Activated T-helper 2 cell treated with anti-CD3 and anti-CD28 coated beads, Interferon-gamma antibody, Interleukin-2, Interleukin-4, amounts not matched to agents 10 μg/mL and 5 μg/mL and 100 μg/mL, durations not matched to agents 14 hours and 24 hours and 36 hours (primary cell): ENCODE measurements at regions of chr12 and their contacts with region 1.

Region 1: GRCh38 chr12:47216150-47216677 is 136.5 kb upstream of the AMIGO2 start:
- DNase-seq: peak; percentile 72
- H3K4me3 Mint-ChIP-seq: peak overlapping the region; percentile 97
- H3K27ac Mint-ChIP-seq: peak overlapping the region; percentile 96
- H3K4me1 Mint-ChIP-seq: peaks cover 52% of the 10 kb centered on the region
- H3K27me3 Mint-ChIP-seq: no peaks in the 10 kb centered on the region

Region 2: GRCh38 chr12:46268590-46269558 is 947.3 kb before region 1 on chr12 and contains the start of gene SLC38A1:
- intact Hi-C with region 1: loop called (anchors 10 kb)
- DNase-seq: peak; percentile 86
- H3K4me3 Mint-ChIP-seq: no peak within 1 kb of the TSS
- H3K27ac Mint-ChIP-seq: no peak within 1 kb of the TSS
- H3K4me1 Mint-ChIP-seq: peaks cover 26% of the 10 kb centered on the region
- H3K27me3 Mint-ChIP-seq: no peaks in the 10 kb centered on the region
- total RNA-seq, gene SLC38A1: 152 and 154 TPM in 2 replicates

Region 3: DNA sequence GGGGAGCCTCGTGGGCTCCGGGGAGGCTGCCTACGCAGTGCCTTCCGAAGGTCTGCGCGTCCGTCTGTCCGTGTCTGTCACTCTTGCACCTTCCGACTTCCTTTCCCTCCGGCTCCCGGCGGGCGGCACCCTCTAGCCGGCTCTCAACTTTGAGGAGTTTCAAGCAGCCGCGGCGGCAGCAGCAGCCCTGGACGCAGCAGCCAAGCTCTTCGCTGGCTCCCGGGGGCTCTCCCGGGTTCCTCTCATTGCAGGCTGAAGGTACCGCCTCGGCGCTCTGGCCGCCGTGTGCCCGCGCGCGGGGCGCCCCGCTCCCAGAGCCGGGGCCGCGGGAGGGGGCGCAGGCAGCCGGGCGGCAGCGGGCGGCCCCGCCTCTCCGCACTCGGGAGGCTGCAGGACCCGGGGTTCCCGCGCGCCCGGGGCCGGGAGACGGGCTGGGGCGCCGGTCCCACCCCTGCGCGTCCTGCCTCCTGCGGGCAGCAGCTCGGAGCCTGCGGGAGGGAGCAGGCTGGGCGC is 136.7 kb before region 1 on chr12 and contains the starts of genes AMIGO2 and PCED1B:
- intact Hi-C with region 1: loop called (anchors 1 kb)
- DNase-seq: peak; percentile 57
- H3K4me3 Mint-ChIP-seq: peak within 1 kb of the TSS; percentile 97
- H3K27ac Mint-ChIP-seq: peak within 1 kb of the TSS; percentile 95
- H3K4me1 Mint-ChIP-seq: peaks cover 63% of the 10 kb centered on the region
- H3K27me3 Mint-ChIP-seq: no peaks in the 10 kb centered on the region
- total RNA-seq, gene AMIGO2: 10.7 and 11.1 TPM in 2 replicates
- total RNA-seq, gene PCED1B: 49.9 and 50.4 TPM in 2 replicates

Region 4: GRCh38 chr12:47133981-47134380 is 82.2 kb before region 1 on chr12:
- intact Hi-C with region 1: no loop called
- DNase-seq: no peak
- H3K4me3 Mint-ChIP-seq: no peak overlapping the region
- H3K27ac Mint-ChIP-seq: no peak overlapping the region
- H3K4me1 Mint-ChIP-seq: peaks cover 2% of the 10 kb centered on the region
- H3K27me3 Mint-ChIP-seq: no peaks in the 10 kb centered on the region

Region 5: DNA sequence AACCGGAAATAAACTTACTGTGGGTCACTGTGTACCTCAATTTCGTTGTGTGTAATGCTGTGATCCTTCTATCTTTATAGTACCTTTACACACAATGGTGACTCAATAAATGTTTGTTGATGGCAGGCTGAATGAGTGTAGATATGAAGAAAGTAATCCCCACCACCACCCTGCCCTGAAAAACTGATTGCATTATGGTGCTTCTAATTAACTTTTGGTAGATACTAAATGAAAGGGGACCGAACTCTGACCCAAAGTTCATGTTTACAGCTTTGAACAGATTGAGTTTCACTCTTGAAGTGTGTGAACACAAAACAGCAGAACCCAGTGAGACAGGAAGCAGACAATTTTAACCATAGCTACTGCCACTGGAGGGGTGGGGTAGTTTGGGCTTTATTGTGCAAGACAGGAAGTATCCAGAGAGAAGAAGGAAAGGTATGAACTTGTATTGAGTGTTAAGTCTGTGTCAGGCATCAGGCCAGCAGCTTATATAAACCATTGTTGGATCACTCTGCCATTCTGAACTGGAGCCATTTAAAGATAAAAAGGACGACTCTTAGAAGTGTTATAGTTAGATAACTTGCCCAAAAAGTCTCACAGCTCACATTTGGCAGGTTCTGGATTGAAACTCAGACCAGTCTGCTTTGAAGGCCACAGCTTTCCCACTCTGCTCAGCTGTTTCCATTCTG is 60.6 kb after region 1 on chr12:
- intact Hi-C with region 1: loop called (anchors 2 kb)
- DNase-seq: peak; percentile 65
- H3K4me3 Mint-ChIP-seq: peak overlapping the region; percentile 48
- H3K27ac Mint-ChIP-seq: peak overlapping the region; percentile 81
- H3K4me1 Mint-ChIP-seq: peaks cover 74% of the 10 kb centered on the region
- H3K27me3 Mint-ChIP-seq: no peaks in the 10 kb centered on the region

Region 6: DNA sequence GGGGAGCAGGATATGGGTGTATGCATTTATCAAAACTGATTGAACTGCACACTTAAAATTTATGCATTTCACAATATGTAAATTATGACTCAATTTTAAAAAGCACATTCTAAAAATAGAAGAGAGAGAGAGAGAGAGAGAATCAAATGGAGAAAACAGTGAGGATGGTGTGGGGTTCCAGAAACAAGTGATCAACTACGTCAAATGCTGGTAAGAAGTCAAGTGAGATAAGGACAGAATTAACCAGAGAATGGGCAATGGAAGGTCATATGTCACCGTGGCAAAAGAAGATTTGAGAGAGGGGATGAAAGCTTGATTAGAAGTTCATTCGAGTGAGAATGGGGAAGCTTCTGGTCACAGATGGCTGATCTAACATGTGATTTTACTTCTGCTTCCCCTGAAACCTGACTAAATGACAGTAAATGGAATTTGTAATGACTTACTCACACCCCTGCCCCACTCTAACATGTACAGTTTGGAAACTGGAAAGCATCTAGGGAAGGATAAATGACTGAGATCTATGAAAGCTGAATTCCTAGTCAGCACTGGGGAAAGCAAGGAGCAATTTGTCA is 140.0 kb after region 1 on chr12:
- intact Hi-C with region 1: loop called (anchors 1 kb)
- DNase-seq: no peak
- H3K4me3 Mint-ChIP-seq: peak overlapping the region; percentile 45
- H3K27ac Mint-ChIP-seq: peak overlapping the region; percentile 96
- H3K4me1 Mint-ChIP-seq: peaks cover 67% of the 10 kb centered on the region
- H3K27me3 Mint-ChIP-seq: no peaks in the 10 kb centered on the region

Region 7: GRCh38 chr12:47458270-47458669 is 242.1 kb after region 1 on chr12:
- intact Hi-C with region 1: no loop called
- DNase-seq: no peak
- H3K4me3 Mint-ChIP-seq: no peak overlapping the region
- H3K27ac Mint-ChIP-seq: no peak overlapping the region
- H3K4me1 Mint-ChIP-seq: no peaks in the 10 kb centered on the region
- H3K27me3 Mint-ChIP-seq: peaks cover 11% of the 10 kb centered on the region